ENCODE measurements at regions of chr16 and their contacts with region 1.

Region 1: DNA sequence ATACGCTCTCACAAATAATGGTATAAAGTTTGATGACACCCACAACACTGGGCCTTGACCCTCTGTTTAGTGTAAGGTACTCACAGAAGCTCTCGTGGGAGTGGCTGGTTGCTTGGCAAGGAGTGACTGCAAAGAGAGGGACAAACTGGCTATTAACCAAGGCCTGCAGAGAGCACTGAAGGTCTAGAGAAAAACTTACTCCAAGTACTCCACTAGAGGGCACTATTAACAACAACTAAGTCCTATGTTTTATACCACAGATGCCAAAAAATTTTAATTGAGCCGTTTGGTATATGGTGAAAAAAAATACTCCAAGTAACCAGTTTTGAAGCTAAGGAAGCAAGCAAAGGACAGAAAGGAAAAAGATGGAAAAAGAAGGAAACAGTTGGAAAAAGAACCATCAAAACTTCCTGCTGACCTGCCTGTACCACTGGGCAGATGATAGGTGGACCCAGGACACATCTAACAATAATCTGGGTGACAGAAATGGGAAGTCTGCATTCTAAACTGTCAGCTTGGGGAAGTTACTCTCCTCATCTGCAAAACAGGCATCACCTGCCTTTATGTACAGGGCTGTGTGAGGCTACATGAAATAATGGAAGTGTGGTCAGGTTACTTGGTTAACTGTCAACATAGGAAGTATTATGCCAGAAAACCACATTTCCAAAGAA is 23.2 kb downstream of the DYNC1LI2 start:
- DNase-seq: no peak
- ATAC-seq: peak; percentile 90 to 98 (median 92)
- H3K4me3 ChIP-seq: no peak overlapping the region
- H3K27ac ChIP-seq: no peak overlapping the region
- H3K4me1 ChIP-seq: no peaks in the 10 kb centered on the region
- H3K27me3 ChIP-seq: no peaks in the 10 kb centered on the region
- CTCF ChIP-seq: peak; percentile 60 to 75 (median 66)
- POLR2A ChIP-seq: no peak

Region 2: GRCh38 chr16:66677179-66677578 is 51.1 kb before region 1 on chr16:
- intact Hi-C with region 1: loop called in 1 of 2 experiments (anchors 10 kb)
- DNase-seq: peak in 1 of 3 donors; percentile 33
- ATAC-seq: no peak
- H3K4me3 ChIP-seq: no peak overlapping the region
- H3K27ac ChIP-seq: no peak overlapping the region
- H3K4me1 ChIP-seq: no peaks in the 10 kb centered on the region
- H3K27me3 ChIP-seq: no peaks in the 10 kb centered on the region
- CTCF ChIP-seq: no peak
- POLR2A ChIP-seq: no peak

Region 3: DNA sequence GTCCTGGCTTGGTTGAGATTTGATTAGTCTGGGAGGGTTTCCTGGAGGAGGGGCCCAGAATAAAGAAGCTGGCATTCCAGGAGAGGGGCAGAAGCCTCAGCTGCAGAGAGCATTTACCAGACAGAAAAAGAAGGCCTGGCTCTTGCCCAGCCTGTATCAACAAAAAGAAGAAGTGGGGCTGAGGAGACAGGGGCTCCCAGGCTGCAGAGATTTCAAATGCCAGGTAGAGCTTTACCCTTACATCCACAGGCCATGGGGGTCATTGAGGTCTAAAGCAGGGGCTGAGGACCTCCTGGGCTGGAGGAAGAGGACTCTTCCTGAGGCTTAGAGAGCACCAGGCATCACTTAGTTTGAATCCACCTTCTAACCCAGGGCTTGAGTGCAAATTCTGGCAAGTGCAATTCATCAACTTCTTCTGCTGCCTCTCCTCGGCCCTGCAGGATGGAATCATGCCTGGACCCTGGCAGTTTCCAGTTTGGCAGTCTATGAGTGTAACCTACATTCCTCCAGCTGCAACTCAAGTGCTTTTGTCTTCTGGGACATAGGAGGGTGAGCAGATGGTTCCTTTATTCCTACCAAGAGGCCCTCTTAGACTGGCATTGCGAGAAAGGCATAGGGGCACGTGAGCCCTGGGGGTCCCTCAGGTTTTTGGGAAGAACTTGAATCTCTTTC is 131.3 kb after region 1 on chr16:
- intact Hi-C with region 1: loop called in 1 of 2 experiments (anchors 10 kb)
- DNase-seq: no peak
- ATAC-seq: no peak
- H3K4me3 ChIP-seq: no peak overlapping the region
- H3K27ac ChIP-seq: no peak overlapping the region
- H3K4me1 ChIP-seq: no peaks in the 10 kb centered on the region
- H3K27me3 ChIP-seq: no peaks in the 10 kb centered on the region
- CTCF ChIP-seq: no peak
- POLR2A ChIP-seq: no peak